ENCODE measurements at regions of chr2 and their contacts with region 1.

Region 1: GRCh38 chr2:69674316-69674670 is 30.8 kb upstream of the AAK1 start:
- DNase-seq: no peak
- H3K4me3 Mint-ChIP-seq: no peak overlapping the region
- H3K27ac Mint-ChIP-seq: no peak overlapping the region
- H3K4me1 Mint-ChIP-seq: peaks cover 27% of the 10 kb centered on the region
- H3K27me3 Mint-ChIP-seq: no peaks in the 10 kb centered on the region

Region 2: GRCh38 chr2:69601179-69601612 is 73.1 kb before region 1 on chr2:
- CTCF ChIA-PET with region 1: no interaction called
- POLR2A ChIA-PET with region 1: no interaction called
- intact Hi-C with region 1: loop called (anchors 1 kb)
- DNase-seq: no peak
- H3K4me3 Mint-ChIP-seq: no peak overlapping the region
- H3K27ac Mint-ChIP-seq: peak overlapping the region; percentile 85
- H3K4me1 Mint-ChIP-seq: peaks cover 88% of the 10 kb centered on the region
- H3K27me3 Mint-ChIP-seq: no peaks in the 10 kb centered on the region

Region 3: DNA sequence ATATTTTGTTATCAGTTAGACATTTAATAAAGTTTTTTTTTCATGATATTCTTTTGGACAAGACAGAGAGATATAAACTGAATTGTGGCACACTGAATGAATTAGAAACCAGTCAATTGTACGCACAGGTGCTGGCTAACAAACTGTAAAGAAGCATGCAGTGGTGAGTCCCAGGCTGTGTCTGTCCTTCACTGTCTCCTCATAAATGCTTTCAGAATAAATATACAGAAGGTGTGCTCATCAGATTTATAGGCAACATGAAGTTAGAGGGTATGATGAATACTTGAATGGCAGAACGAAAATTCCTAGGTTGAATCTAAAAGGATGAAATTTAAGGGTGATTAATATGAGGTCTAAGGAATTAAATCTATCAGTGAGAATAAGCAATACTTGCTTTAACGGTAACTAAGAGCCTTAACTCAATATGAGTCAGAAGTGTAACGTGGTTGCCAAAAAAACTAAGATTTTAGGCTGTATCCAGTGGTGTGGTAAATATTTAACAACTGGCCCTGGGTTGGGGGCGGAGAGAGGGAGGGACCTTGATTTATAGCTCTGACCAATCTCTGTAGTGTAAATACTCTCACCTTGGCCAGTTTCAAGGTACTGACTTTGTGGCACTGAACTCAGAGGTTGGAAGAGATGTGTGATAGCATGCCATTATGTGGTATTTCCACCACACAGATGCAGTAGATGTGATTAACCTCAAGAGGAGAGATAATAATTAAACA is 11.2 kb after region 1 on chr2:
- CTCF ChIA-PET with region 1: interaction called, 4 read pairs
- POLR2A ChIA-PET with region 1: no interaction called
- intact Hi-C with region 1: loop called (anchors 1 kb)
- DNase-seq: peak; percentile 70
- H3K4me3 Mint-ChIP-seq: no peak overlapping the region
- H3K27ac Mint-ChIP-seq: no peak overlapping the region
- H3K4me1 Mint-ChIP-seq: peaks cover 59% of the 10 kb centered on the region
- H3K27me3 Mint-ChIP-seq: no peaks in the 10 kb centered on the region

Region 4: DNA sequence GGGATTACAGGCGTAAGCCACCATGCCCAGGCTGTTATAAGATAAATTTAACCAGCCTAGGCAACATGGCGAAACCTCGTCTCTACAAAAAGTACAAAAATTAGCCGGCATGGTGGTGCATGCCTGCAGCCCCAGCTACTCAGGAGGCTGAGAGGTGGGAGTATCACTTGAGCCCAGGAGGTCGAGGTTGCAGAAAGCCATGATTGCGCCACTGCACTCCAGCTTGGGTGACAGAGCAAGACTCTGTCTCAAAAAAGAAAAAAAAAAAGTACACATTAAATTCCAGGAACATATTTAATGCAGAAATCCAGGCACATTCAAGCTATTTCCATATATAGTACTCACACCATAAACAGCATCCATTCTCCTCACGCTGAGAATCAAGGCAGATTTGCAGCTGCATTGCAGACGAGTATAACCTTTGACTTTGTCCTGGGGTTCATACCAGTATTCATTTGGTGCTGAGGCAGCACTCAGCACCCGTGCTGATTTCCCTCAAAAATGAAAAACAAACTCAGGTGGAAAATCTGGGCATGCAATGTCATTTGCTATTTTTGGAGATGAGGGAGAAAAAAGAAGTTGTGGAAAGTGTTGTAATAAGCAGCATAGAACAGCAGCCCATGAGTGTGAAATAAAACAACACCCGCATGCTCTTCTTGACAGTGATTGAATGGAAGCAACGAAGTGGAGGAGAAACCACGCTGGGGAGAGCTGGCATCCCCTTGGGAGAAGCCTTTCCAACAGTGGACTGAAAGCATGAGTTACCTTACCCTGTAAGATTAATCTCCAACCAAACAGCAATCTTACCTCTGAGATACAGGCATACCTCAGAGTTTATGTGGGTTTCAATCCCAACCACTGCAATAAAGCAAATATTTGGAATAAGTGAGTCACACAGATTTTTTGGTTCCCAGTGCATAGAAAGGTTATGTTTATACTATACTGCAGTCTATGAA is 20.9 kb after region 1 on chr2:
- CTCF ChIA-PET with region 1: no interaction called
- POLR2A ChIA-PET with region 1: no interaction called
- intact Hi-C with region 1: loop called (anchors 2 kb)
- DNase-seq: no peak
- H3K4me3 Mint-ChIP-seq: no peak overlapping the region
- H3K27ac Mint-ChIP-seq: peak overlapping the region; percentile 47
- H3K4me1 Mint-ChIP-seq: peaks cover 78% of the 10 kb centered on the region
- H3K27me3 Mint-ChIP-seq: no peaks in the 10 kb centered on the region

Region 5: DNA sequence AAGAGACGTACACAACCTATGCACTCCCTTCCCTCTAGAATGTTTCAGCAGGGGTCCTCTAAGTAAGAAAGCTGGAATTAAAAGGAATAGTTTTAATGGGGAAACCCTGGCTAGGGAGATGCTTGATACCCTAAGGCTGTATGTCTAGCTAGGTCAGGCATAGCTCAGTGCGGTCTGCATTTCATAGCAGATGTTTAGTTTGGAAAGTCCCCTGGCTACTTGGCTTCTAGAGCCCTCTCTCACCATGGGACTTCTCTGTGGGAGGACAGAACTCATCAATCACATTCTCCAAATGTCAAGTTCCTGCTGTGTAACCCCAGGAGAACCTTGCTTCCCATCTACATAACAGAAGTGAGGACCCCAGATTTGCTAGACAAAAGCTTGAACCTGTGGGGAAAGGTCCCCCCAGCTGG is 43.6 kb after region 1 on chr2:
- CTCF ChIA-PET with region 1: no interaction called
- POLR2A ChIA-PET with region 1: no interaction called
- intact Hi-C with region 1: loop called (anchors 2 kb)
- DNase-seq: no peak
- H3K4me3 Mint-ChIP-seq: no peak overlapping the region
- H3K27ac Mint-ChIP-seq: no peak overlapping the region
- H3K4me1 Mint-ChIP-seq: peaks cover 14% of the 10 kb centered on the region
- H3K27me3 Mint-ChIP-seq: no peaks in the 10 kb centered on the region